ENCODE measurements at regions of chr2 and their contacts with region 1.

Region 1: GRCh38 chr2:127526149-127527000 is at the start of gene IWS1:
- DNase-seq: peak; percentile 97
- ATAC-seq: peak; percentile 87
- H3K4me3 ChIP-seq: peak within 1 kb of the TSS; percentile 67 to 98 (median 91)
- H3K4me3 Mint-ChIP-seq: peak within 1 kb of the TSS; percentile 99
- H3K27ac ChIP-seq: peak within 1 kb of the TSS; percentile 95 to 98
- H3K27ac Mint-ChIP-seq: peak within 1 kb of the TSS; percentile 98
- H3K4me1 ChIP-seq: peaks cover 17 to 21% of the 10 kb centered on the region in 2 donors
- H3K4me1 Mint-ChIP-seq: peaks cover 36% of the 10 kb centered on the region
- H3K27me3 ChIP-seq: no peaks in the 10 kb centered on the region
- H3K27me3 Mint-ChIP-seq: no peaks in the 10 kb centered on the region
- CTCF ChIP-seq: no peak
- total RNA-seq, gene IWS1: 45.9 and 49.6 TPM in 2 replicates

Region 2: GRCh38 chr2:127387655-127388422 is 138.5 kb before region 1 on chr2 and contains the start of gene MAP3K2:
- CTCF ChIA-PET with region 1: no interaction called
- POLR2A ChIA-PET with region 1: no interaction called
- intact Hi-C with region 1: loop called (anchors 1 kb)
- DNase-seq: peak; percentile 97
- ATAC-seq: peak; percentile 74
- H3K4me3 ChIP-seq: peak within 1 kb of the TSS; percentile 73 to 95 (median 80)
- H3K4me3 Mint-ChIP-seq: peak within 1 kb of the TSS; percentile 92
- H3K27ac ChIP-seq: peak within 1 kb of the TSS; percentile 97 to 99
- H3K27ac Mint-ChIP-seq: peak within 1 kb of the TSS; percentile 99
- H3K4me1 ChIP-seq: peaks cover 50 to 57% of the 10 kb centered on the region in 2 donors
- H3K4me1 Mint-ChIP-seq: peaks cover 80% of the 10 kb centered on the region
- H3K27me3 ChIP-seq: no peaks in the 10 kb centered on the region
- H3K27me3 Mint-ChIP-seq: no peaks in the 10 kb centered on the region
- CTCF ChIP-seq: no peak
- total RNA-seq, gene MAP3K2: 112 and 118 TPM in 2 replicates

Region 3: GRCh38 chr2:127576433-127577207 is 50.2 kb after region 1 on chr2:
- CTCF ChIA-PET with region 1: no interaction called
- POLR2A ChIA-PET with region 1: interaction called, 3 read pairs
- intact Hi-C with region 1: loop called (anchors 2 kb)
- DNase-seq: peak; percentile 6
- ATAC-seq: no peak
- H3K4me3 ChIP-seq: no peak overlapping the region
- H3K4me3 Mint-ChIP-seq: peak overlapping the region; percentile 88
- H3K27ac ChIP-seq: peak overlapping the region; percentile 59 to 70
- H3K27ac Mint-ChIP-seq: peak overlapping the region; percentile 91
- H3K4me1 ChIP-seq: peaks cover 45 to 47% of the 10 kb centered on the region in 2 donors
- H3K4me1 Mint-ChIP-seq: peaks cover 63% of the 10 kb centered on the region
- H3K27me3 ChIP-seq: no peaks in the 10 kb centered on the region
- H3K27me3 Mint-ChIP-seq: no peaks in the 10 kb centered on the region
- CTCF ChIP-seq: no peak

Region 4: GRCh38 chr2:127649684-127650040 is 123.3 kb after region 1 on chr2:
- CTCF ChIA-PET with region 1: interaction called, 4 read pairs
- POLR2A ChIA-PET with region 1: no interaction called
- intact Hi-C with region 1: loop called (anchors 5 kb)
- DNase-seq: peak; percentile 87
- ATAC-seq: peak; percentile 71
- H3K4me3 ChIP-seq: peak overlapping the region in 1 of 5 experiments; percentile 6
- H3K4me3 Mint-ChIP-seq: peak overlapping the region; percentile 74
- H3K27ac ChIP-seq: no peak overlapping the region
- H3K27ac Mint-ChIP-seq: peak overlapping the region; percentile 82
- H3K4me1 ChIP-seq: peaks cover 30 to 66% of the 10 kb centered on the region in 2 donors
- H3K4me1 Mint-ChIP-seq: peaks cover 64% of the 10 kb centered on the region
- H3K27me3 ChIP-seq: no peaks in the 10 kb centered on the region
- H3K27me3 Mint-ChIP-seq: no peaks in the 10 kb centered on the region
- CTCF ChIP-seq: peak; percentile 92

Region 5: DNA sequence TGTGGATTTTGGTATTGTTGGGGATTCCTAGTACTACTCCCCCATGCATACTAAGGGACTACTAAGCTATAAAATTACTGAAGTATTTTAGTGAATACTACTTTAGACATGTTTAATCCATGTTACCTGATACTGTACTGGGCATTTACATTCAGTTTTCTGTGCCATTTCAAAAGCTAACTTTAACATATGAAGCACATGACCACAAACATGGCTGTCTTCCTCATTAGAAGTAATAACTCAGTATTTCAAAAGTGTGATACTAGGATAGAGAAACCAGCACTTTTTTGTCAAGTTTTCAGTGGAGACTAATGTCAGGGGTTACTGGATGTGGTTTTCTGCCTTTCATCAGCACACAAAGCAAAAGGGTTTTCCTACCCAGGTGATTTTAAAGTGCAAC is 256.7 kb after region 1 on chr2:
- CTCF ChIA-PET with region 1: no interaction called
- POLR2A ChIA-PET with region 1: no interaction called
- intact Hi-C with region 1: no loop called
- DNase-seq: no peak
- ATAC-seq: no peak
- H3K4me3 ChIP-seq: no peak overlapping the region
- H3K4me3 Mint-ChIP-seq: no peak overlapping the region
- H3K27ac ChIP-seq: peak overlapping the region in 1 of 2 donors; percentile 36
- H3K27ac Mint-ChIP-seq: no peak overlapping the region
- H3K4me1 ChIP-seq: no peaks in the 10 kb centered on the region
- H3K4me1 Mint-ChIP-seq: peaks cover 30% of the 10 kb centered on the region
- H3K27me3 ChIP-seq: no peaks in the 10 kb centered on the region
- H3K27me3 Mint-ChIP-seq: no peaks in the 10 kb centered on the region
- CTCF ChIP-seq: no peak

Region 6: GRCh38 chr2:127810619-127811396 is 284.4 kb after region 1 on chr2 and contains the start of gene WDR33:
- CTCF ChIA-PET with region 1: no interaction called
- POLR2A ChIA-PET with region 1: no interaction called
- intact Hi-C with region 1: loop called (anchors 1 kb)
- DNase-seq: peak; percentile 96
- ATAC-seq: peak; percentile 97
- H3K4me3 ChIP-seq: peak within 1 kb of the TSS; percentile 66 to 99 (median 78)
- H3K4me3 Mint-ChIP-seq: peak within 1 kb of the TSS; percentile 97
- H3K27ac ChIP-seq: peak within 1 kb of the TSS; percentile 91 to 96
- H3K27ac Mint-ChIP-seq: peak within 1 kb of the TSS; percentile 99
- H3K4me1 ChIP-seq: peaks cover 30 to 37% of the 10 kb centered on the region in 2 donors
- H3K4me1 Mint-ChIP-seq: peaks cover 46% of the 10 kb centered on the region
- H3K27me3 ChIP-seq: no peaks in the 10 kb centered on the region
- H3K27me3 Mint-ChIP-seq: no peaks in the 10 kb centered on the region
- CTCF ChIP-seq: no peak
- total RNA-seq, gene WDR33: 95.2 and 101 TPM in 2 replicates

Region 7: DNA sequence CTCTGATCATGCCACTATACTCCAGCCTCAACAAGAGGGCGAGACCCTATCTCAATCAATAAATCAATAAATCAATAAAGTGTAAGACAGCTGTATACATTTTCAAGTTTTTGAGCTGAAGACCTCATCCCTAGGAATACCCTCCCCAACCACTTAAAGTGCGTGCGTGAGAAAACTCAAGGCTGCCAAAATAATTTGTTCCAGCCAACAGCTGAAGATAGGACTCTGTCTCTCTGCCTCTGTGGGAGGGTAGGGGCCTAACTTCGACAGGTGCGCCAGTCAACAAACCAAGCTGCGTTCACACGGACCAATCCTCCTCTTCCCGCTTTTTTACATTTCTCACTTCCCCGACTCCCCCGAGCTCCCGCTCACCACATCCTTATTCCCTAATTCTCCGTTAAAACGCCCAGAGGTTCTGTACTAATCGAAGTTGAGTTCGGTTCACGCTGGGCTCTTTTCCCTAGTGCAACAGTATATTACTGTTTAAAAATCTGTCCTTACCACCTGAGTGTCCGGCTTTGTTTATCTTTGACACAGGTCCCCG is 331.0 kb after region 1 on chr2:
- CTCF ChIA-PET with region 1: no interaction called
- POLR2A ChIA-PET with region 1: no interaction called
- intact Hi-C with region 1: loop called (anchors 1 kb)
- DNase-seq: no peak
- ATAC-seq: no peak
- H3K4me3 ChIP-seq: peak overlapping the region; percentile 68 to 87 (median 80)
- H3K4me3 Mint-ChIP-seq: peak overlapping the region; percentile 88
- H3K27ac ChIP-seq: peak overlapping the region; percentile 41 to 85
- H3K27ac Mint-ChIP-seq: peak overlapping the region; percentile 57
- H3K4me1 ChIP-seq: peaks cover 16 to 36% of the 10 kb centered on the region in 2 donors
- H3K4me1 Mint-ChIP-seq: peaks cover 46% of the 10 kb centered on the region
- H3K27me3 ChIP-seq: no peaks in the 10 kb centered on the region
- H3K27me3 Mint-ChIP-seq: no peaks in the 10 kb centered on the region
- CTCF ChIP-seq: no peak

Region 8: GRCh38 chr2:128090945-128091725 is 564.8 kb after region 1 on chr2 and contains the start of gene UGGT1:
- CTCF ChIA-PET with region 1: no interaction called
- POLR2A ChIA-PET with region 1: no interaction called
- intact Hi-C with region 1: loop called (anchors 1 kb)
- DNase-seq: peak; percentile 98
- ATAC-seq: peak; percentile 97
- H3K4me3 ChIP-seq: peak within 1 kb of the TSS; percentile 73 to 93 (median 79)
- H3K4me3 Mint-ChIP-seq: peak within 1 kb of the TSS; percentile 92
- H3K27ac ChIP-seq: peak within 1 kb of the TSS; percentile 57 to 78
- H3K27ac Mint-ChIP-seq: peak within 1 kb of the TSS; percentile 92
- H3K4me1 ChIP-seq: peaks cover 12 to 18% of the 10 kb centered on the region in 2 donors
- H3K4me1 Mint-ChIP-seq: peaks cover 42% of the 10 kb centered on the region
- H3K27me3 ChIP-seq: no peaks in the 10 kb centered on the region
- H3K27me3 Mint-ChIP-seq: no peaks in the 10 kb centered on the region
- CTCF ChIP-seq: no peak
- total RNA-seq, gene UGGT1: 42.1 and 44.1 TPM in 2 replicates

Measured in B cell (primary cell).